MCF 10A (cell line): ENCODE measurements at regions of chr10 and their contacts with region 1.

Region 1: DNA sequence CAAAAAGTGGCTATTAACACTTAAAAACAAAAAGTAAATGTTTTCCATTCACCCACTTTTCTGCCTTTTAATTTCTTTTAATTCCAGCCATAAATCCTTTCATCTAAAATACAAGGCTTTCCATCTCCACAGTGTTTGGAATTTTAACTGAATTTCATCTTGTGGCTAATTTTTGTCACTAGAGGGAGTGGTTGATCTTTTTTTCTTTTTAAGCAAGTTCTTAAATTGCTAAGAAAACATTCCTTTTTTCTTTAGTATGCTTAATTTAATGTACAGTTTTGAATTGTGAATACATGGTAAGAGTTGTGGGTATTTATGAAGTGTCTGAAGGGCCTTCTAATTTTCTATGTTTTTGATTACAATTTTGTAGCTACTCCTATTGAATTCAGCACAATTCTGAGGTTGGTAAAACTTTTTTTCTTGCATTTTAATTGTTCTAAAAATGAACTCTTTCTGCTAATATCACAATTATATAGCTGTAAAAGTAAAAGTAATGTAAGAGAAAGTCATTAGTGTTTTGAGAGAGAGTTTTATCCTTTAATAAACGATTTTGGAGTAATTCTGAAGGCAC is 54.9 kb upstream of the ANK3 start:
- DNase-seq: peak; percentile 40
- H3K4me3 Mint-ChIP-seq: no peak overlapping the region
- H3K27ac Mint-ChIP-seq: no peak overlapping the region
- H3K4me1 Mint-ChIP-seq: peaks cover 22% of the 10 kb centered on the region
- H3K27me3 Mint-ChIP-seq: no peaks in the 10 kb centered on the region
- CTCF ChIP-seq: peak; percentile 63

Region 2: GRCh38 chr10:60114765-60115586 is 329.6 kb before region 1 on chr10:
- CTCF ChIA-PET with region 1: interaction called, 14 read pairs
- POLR2A ChIA-PET with region 1: no interaction called
- intact Hi-C with region 1: no loop called
- DNase-seq: peak; percentile 70
- H3K4me3 Mint-ChIP-seq: no peak overlapping the region
- H3K27ac Mint-ChIP-seq: no peak overlapping the region
- H3K4me1 Mint-ChIP-seq: no peaks in the 10 kb centered on the region
- H3K27me3 Mint-ChIP-seq: no peaks in the 10 kb centered on the region
- CTCF ChIP-seq: peak; percentile 57

Region 3: DNA sequence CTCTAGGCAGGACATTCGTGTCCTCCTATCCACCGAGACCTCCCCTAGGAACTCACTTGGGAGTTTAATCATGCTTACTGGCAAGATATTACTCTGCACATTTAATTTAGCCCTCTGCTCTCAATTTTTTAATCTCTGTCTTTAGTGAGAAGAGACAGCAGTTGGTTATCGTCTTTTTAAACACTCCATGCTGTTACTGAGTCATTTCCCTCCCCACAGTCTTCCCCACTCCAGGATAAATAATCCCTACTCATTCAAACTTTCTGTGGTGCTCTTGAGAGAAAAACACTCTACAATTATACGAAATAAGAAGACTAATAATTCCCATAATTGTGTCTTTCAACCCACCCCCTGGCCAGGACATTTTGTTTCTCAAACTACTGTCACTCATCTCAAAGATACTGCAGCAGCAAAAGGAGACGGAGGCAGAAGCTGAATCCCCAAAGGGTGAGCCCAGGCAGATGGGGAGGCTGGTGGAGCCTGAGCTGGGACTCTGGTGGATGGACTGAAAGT is 139.1 kb before region 1 on chr10:
- CTCF ChIA-PET with region 1: no interaction called
- POLR2A ChIA-PET with region 1: no interaction called
- intact Hi-C with region 1: no loop called
- DNase-seq: no peak
- H3K4me3 Mint-ChIP-seq: no peak overlapping the region
- H3K27ac Mint-ChIP-seq: no peak overlapping the region
- H3K4me1 Mint-ChIP-seq: no peaks in the 10 kb centered on the region
- H3K27me3 Mint-ChIP-seq: no peaks in the 10 kb centered on the region
- CTCF ChIP-seq: no peak

Region 4: GRCh38 chr10:60461688-60462087 is 17.1 kb after region 1 on chr10:
- CTCF ChIA-PET with region 1: interaction called, 15 read pairs
- POLR2A ChIA-PET with region 1: interaction called, 4 read pairs
- intact Hi-C with region 1: no loop called
- DNase-seq: no peak
- H3K4me3 Mint-ChIP-seq: no peak overlapping the region
- H3K27ac Mint-ChIP-seq: no peak overlapping the region
- H3K4me1 Mint-ChIP-seq: peaks cover 14% of the 10 kb centered on the region
- H3K27me3 Mint-ChIP-seq: no peaks in the 10 kb centered on the region
- CTCF ChIP-seq: no peak

Region 5: DNA sequence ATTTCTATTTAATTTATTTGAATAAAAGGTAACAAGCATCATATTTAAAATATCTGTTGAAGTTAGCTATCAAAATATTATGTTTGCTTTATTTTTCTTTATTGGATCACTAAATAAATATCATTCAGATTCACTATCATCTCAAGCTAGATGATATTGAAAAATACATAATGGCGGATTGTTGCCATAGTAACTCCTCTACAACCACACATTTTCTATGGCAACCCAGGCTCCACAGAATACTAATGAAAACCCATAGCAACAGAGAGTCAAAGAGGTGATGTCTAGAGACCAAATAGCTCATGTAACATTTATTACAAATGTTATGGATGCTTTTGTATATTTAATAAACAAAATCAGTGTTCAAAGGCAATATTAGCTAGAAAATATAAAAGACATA is 184.8 kb after region 1 on chr10:
- CTCF ChIA-PET with region 1: interaction called, 11 read pairs
- POLR2A ChIA-PET with region 1: no interaction called
- intact Hi-C with region 1: no loop called
- DNase-seq: no peak
- H3K4me3 Mint-ChIP-seq: no peak overlapping the region
- H3K27ac Mint-ChIP-seq: no peak overlapping the region
- H3K4me1 Mint-ChIP-seq: no peaks in the 10 kb centered on the region
- H3K27me3 Mint-ChIP-seq: no peaks in the 10 kb centered on the region
- CTCF ChIP-seq: no peak

Region 6: GRCh38 chr10:60769406-60769805 is 324.8 kb after region 1 on chr10:
- CTCF ChIA-PET with region 1: interaction called, 72 read pairs
- POLR2A ChIA-PET with region 1: interaction called, 5 read pairs
- intact Hi-C with region 1: loop called (anchors 1 kb)
- DNase-seq: no peak
- H3K4me3 Mint-ChIP-seq: no peak overlapping the region
- H3K27ac Mint-ChIP-seq: no peak overlapping the region
- H3K4me1 Mint-ChIP-seq: peaks cover 21% of the 10 kb centered on the region
- H3K27me3 Mint-ChIP-seq: no peaks in the 10 kb centered on the region
- CTCF ChIP-seq: no peak

Region 7: DNA sequence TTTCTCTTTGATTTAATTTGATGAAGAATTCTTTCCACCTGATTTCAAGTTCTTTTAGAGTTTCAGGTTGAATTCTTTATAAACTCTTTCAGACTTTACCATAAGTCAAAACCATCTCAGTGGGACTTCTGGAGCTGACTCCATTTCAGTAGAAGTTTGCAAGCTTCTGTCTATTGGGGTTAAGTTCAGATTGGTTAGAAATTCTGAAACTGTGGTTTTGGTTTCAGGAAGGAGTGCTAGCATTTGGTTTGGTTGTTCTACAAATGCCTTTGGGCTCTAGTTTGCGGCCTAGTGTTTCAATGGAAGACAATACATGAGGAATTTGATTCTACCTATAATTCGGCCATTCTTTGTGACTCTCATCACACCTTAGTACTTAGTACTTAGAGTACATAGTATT is 676.2 kb after region 1 on chr10:
- CTCF ChIA-PET with region 1: no interaction called
- POLR2A ChIA-PET with region 1: no interaction called
- intact Hi-C with region 1: no loop called
- DNase-seq: no peak
- H3K4me3 Mint-ChIP-seq: no peak overlapping the region
- H3K27ac Mint-ChIP-seq: no peak overlapping the region
- H3K4me1 Mint-ChIP-seq: no peaks in the 10 kb centered on the region
- H3K27me3 Mint-ChIP-seq: no peaks in the 10 kb centered on the region
- CTCF ChIP-seq: no peak